Heart left ventricle (tissue), 16 donors: ENCODE measurements at regions of chr16 and their contacts with region 1.

Region 1: DNA sequence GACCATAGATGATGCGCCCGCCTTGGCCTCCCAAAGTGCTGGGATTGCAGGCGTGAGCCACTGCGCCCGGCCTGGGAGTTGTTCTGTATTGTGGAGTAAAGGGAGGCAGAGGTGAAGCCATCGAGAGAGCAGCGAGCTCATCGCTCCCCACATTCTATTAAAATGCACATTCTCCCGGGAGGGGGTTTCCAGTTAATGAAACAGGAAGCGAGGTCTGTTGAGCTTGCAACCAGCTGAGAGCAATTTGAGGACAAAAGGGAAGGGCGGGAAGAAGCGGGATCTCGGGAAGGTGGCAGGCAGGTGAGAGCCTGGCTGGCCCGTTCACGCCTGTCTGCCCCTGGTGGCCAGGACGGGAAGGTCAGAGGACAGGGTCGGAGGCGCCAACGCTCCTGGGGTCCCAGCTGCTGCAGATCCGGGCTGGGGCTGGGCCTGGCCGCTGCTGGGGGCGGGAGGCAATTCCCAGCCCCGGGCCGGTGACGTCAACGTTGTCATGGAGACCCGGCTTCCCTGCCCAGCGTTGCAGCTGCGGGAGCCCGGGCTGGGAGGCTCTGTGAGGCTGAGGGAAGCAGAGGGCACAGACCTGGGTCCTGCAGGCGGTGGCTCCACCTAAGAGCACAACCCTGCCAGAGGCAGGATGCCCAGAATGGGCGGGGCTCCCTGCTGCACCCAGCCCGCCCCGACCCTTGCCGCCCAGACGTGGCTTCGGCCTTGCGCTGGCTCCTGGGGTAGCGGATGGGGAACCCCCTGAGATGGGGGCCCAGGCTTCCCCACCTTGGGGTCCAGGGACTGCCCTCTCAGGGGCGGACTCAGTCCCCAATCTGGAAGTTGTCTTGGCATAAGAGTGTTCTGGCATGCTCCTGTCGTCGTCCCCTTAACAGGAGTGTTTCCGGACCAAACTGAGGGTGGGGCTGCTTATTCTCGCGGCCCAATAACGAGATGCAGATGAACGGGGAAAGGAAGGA is 48.7 kb upstream of the PLCG2 start:
- DNase-seq: peak; percentile 89 to 94 (median 89)
- ATAC-seq: peak; percentile 90 to 97 (median 96)
- H3K4me3 ChIP-seq: peak overlapping the region in 11 of 12 donors; percentile 2 to 54 (median 44)
- H3K27ac ChIP-seq: peak overlapping the region in 10 of 12 donors; percentile 24 to 76 (median 62)
- H3K4me1 ChIP-seq: peaks cover 0 to 16% (median 10%) of the 10 kb centered on the region in 12 donors
- H3K27me3 ChIP-seq: no peaks in the 10 kb centered on the region
- CTCF ChIP-seq: peak; percentile 23 to 74 (median 54)
- POLR2A ChIP-seq: peak in 1 of 2 donors; percentile 27

Region 2: GRCh38 chr16:81360135-81360534 is 370.2 kb before region 1 on chr16:
- intact Hi-C with region 1: loop called in 4 of 10 experiments (anchors 5 to 10 kb)
- DNase-seq: no peak
- ATAC-seq: no peak
- H3K4me3 ChIP-seq: no peak overlapping the region
- H3K27ac ChIP-seq: no peak overlapping the region
- H3K4me1 ChIP-seq: no peaks in the 10 kb centered on the region
- H3K27me3 ChIP-seq: no peaks in the 10 kb centered on the region
- CTCF ChIP-seq: no peak
- POLR2A ChIP-seq: no peak

Region 3: GRCh38 chr16:81711657-81712319 is 18.6 kb before region 1 on chr16:
- intact Hi-C with region 1: no loop called
- DNase-seq: no peak
- ATAC-seq: peak in 2 of 4 donors; percentile 18 to 57
- H3K4me3 ChIP-seq: no peak overlapping the region
- H3K27ac ChIP-seq: peak overlapping the region in 1 of 12 donors; percentile 7
- H3K4me1 ChIP-seq: peaks cover 0 to 10% (median 0%) of the 10 kb centered on the region in 12 donors
- H3K27me3 ChIP-seq: no peaks in the 10 kb centered on the region
- CTCF ChIP-seq: no peak
- POLR2A ChIP-seq: no peak